Esophagus squamous epithelium (tissue), 5 donors: ENCODE measurements at regions of chr6 and their contacts with region 1.

Region 1: GRCh38 chr6:121430514-121431460 is 4.7 kb upstream of the GJA1 start:
- DNase-seq: no peak
- H3K4me3 ChIP-seq: no peak overlapping the region
- H3K27ac ChIP-seq: no peak overlapping the region
- H3K4me1 ChIP-seq: peaks cover 0 to 30% (median 0%) of the 10 kb centered on the region in 3 donors
- H3K27me3 ChIP-seq: no peaks in the 10 kb centered on the region
- CTCF ChIP-seq: peak in 5 of 6 experiments; percentile 47 to 87 (median 61)
- POLR2A ChIP-seq: no peak

Region 2: GRCh38 chr6:121365536-121366521 is 65.0 kb before region 1 on chr6:
- intact Hi-C with region 1: no loop called
- DNase-seq: no peak
- H3K4me3 ChIP-seq: no peak overlapping the region
- H3K27ac ChIP-seq: no peak overlapping the region
- H3K4me1 ChIP-seq: no peaks in the 10 kb centered on the region
- H3K27me3 ChIP-seq: no peaks in the 10 kb centered on the region
- CTCF ChIP-seq: no peak
- POLR2A ChIP-seq: no peak

Region 3: DNA sequence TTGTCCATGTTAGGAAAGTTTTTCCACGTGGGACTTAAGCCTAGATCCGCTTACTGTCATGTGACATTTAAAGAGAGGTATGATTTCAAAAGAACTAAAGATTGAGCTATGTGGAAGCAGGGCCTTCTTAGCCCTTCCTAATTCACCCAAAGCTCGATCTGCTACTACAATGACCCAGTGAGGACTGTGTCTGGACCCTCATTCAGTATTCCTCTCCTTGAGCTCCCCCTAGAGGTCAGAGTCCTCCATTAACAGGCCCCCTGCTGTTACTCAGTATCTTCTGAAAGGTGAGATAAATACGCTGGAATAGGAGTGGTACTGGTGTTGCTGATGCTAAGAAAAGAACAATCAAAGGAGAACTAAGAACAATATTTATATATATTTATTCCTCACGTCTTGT is 418.7 kb after region 1 on chr6:
- intact Hi-C with region 1: loop called (anchors 10 kb)
- DNase-seq: no peak
- H3K4me3 ChIP-seq: no peak overlapping the region
- H3K27ac ChIP-seq: no peak overlapping the region
- H3K4me1 ChIP-seq: peaks cover 0 to 27% (median 4%) of the 10 kb centered on the region in 3 donors
- H3K27me3 ChIP-seq: no peaks in the 10 kb centered on the region
- CTCF ChIP-seq: peak in 5 of 6 experiments; percentile 27 to 69 (median 51)
- POLR2A ChIP-seq: no peak

Region 4: DNA sequence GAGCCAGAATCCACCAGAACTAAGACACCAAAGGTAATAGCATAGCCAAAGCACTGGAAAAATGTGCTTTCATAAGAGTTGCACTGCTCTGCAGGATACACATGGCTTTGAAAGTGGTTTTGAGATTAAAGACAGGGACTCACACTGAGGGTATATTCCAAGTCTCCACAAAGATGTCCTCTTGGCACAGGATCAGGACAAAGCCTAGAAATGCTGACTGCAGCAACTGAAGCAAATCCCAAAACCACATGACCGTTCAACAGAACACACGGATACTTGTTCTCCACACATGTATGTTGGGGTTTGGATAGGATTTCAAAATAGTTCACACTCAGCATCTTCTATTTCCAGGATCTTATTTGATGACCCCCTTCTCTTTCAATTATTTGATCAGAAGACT is 604.4 kb after region 1 on chr6:
- intact Hi-C with region 1: loop called (anchors 5 kb)
- DNase-seq: no peak
- H3K4me3 ChIP-seq: no peak overlapping the region
- H3K27ac ChIP-seq: no peak overlapping the region
- H3K4me1 ChIP-seq: no peaks in the 10 kb centered on the region
- H3K27me3 ChIP-seq: no peaks in the 10 kb centered on the region
- CTCF ChIP-seq: no peak
- POLR2A ChIP-seq: no peak

Region 5: GRCh38 chr6:122184401-122184827 is 753.6 kb after region 1 on chr6:
- intact Hi-C with region 1: loop called (anchors 5 kb)
- DNase-seq: no peak
- H3K4me3 ChIP-seq: peak overlapping the region in 1 of 4 donors; percentile 12
- H3K27ac ChIP-seq: no peak overlapping the region
- H3K4me1 ChIP-seq: no peaks in the 10 kb centered on the region
- H3K27me3 ChIP-seq: no peaks in the 10 kb centered on the region
- CTCF ChIP-seq: peak in 5 of 6 experiments; percentile 19 to 57 (median 48)
- POLR2A ChIP-seq: no peak